ENCODE measurements at regions of chr5 and their contacts with region 1.

Region 1: GRCh38 chr5:112419986-112420864 is 1.1 kb upstream of the EPB41L4A start:
- DNase-seq: peak; percentile 22
- H3K4me3 Mint-ChIP-seq: peak overlapping the region; percentile 23
- H3K27ac Mint-ChIP-seq: no peak overlapping the region
- H3K4me1 Mint-ChIP-seq: peaks cover 11% of the 10 kb centered on the region
- H3K27me3 Mint-ChIP-seq: peaks cover 52% of the 10 kb centered on the region

Region 2: DNA sequence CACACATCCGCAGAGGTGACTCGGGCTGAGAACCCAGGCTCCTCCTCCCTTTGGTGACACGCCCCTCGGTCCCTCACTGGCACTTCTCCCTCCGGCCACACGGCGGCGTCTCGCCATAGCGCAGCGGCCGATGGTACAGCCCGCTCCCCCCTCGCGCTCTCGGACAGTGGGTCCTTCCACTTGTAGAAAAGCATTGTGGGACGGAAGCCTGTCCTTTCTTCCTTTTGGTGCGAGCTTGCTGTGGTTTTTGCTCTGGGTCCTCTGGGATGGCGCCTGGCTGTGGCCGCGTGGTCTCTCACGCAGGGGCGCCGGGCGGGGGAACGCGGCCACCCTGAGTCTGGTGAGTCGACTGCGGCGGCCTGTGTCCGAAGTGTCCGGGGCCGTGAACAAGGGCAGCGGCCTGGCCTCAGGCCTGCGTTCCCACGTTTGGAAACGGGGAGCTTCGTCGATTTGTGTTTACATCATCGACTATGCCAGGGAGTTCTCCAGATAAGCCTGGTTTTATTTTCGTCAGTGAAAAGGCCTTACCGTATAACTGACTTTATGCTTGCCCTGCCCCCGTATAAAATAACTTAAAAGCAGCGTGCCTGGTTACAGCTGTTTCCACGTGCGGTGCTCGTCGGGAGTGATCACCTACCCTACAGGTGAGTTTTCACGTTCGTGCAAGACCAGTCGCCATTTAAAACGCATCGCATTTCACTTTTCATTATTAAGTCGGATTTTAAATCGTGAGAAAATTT is 259.4 kb before region 1 on chr5:
- intact Hi-C with region 1: loop called (anchors 5 kb)
- DNase-seq: peak; percentile 90
- H3K4me3 Mint-ChIP-seq: peak overlapping the region; percentile 90
- H3K27ac Mint-ChIP-seq: peak overlapping the region; percentile 80
- H3K4me1 Mint-ChIP-seq: peaks cover 34% of the 10 kb centered on the region
- H3K27me3 Mint-ChIP-seq: no peaks in the 10 kb centered on the region

Region 3: GRCh38 chr5:112174959-112175594 is 245.1 kb before region 1 on chr5:
- intact Hi-C with region 1: loop called (anchors 1 kb)
- DNase-seq: peak; percentile 11
- H3K4me3 Mint-ChIP-seq: no peak overlapping the region
- H3K27ac Mint-ChIP-seq: no peak overlapping the region
- H3K4me1 Mint-ChIP-seq: peaks cover 3% of the 10 kb centered on the region
- H3K27me3 Mint-ChIP-seq: peaks cover 21% of the 10 kb centered on the region

Region 4: GRCh38 chr5:112379542-112380325 is 40.5 kb before region 1 on chr5:
- intact Hi-C with region 1: no loop called
- DNase-seq: no peak
- H3K4me3 Mint-ChIP-seq: no peak overlapping the region
- H3K27ac Mint-ChIP-seq: no peak overlapping the region
- H3K4me1 Mint-ChIP-seq: no peaks in the 10 kb centered on the region
- H3K27me3 Mint-ChIP-seq: peaks cover 9% of the 10 kb centered on the region

Region 5: GRCh38 chr5:113294311-113295110 is 874.3 kb after region 1 on chr5:
- intact Hi-C with region 1: no loop called
- DNase-seq: peak; percentile 69
- H3K4me3 Mint-ChIP-seq: peak overlapping the region; percentile 86
- H3K27ac Mint-ChIP-seq: no peak overlapping the region
- H3K4me1 Mint-ChIP-seq: peaks cover 22% of the 10 kb centered on the region
- H3K27me3 Mint-ChIP-seq: peaks cover 69% of the 10 kb centered on the region

Measured in activated T-helper 2 cell treated with anti-CD3 and anti-CD28 coated beads, Interferon-gamma antibody, Interleukin-2, Interleukin-4, amounts not matched to agents 10 μg/mL and 5 μg/mL and 100 μg/mL, durations not matched to agents 14 hours and 24 hours and 36 hours (primary cell).